PC-9 (cell line): ENCODE measurements at regions of chr13 and their contacts with region 1.

Region 1: DNA sequence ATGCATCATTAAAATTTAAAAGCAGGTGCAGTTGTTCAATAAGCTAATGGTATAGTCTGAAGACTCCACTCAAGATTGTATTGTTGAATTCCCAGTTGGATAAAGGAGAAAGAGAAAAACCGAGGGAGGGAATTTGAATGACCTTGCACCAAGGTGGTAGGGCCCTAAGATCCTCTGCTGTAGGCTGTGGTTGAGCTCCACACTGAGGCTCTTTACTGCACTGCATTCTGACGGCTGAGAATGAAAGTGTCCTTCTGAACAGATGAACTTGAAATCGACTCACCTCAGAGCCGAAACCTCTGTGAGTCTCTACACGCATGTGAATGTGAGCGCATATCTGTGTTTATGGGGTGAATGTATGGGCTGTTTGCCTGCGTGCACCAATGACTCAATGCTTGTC is 388.9 kb upstream of the DACH1 start:
- DNase-seq: peak in 1 of 2 experiments; percentile 3
- H3K4me3 ChIP-seq: no peak overlapping the region
- H3K27ac ChIP-seq: no peak overlapping the region
- H3K4me1 ChIP-seq: no peaks in the 10 kb centered on the region
- H3K27me3 ChIP-seq: no peaks in the 10 kb centered on the region
- CTCF ChIP-seq: peak; percentile 52

Region 2: DNA sequence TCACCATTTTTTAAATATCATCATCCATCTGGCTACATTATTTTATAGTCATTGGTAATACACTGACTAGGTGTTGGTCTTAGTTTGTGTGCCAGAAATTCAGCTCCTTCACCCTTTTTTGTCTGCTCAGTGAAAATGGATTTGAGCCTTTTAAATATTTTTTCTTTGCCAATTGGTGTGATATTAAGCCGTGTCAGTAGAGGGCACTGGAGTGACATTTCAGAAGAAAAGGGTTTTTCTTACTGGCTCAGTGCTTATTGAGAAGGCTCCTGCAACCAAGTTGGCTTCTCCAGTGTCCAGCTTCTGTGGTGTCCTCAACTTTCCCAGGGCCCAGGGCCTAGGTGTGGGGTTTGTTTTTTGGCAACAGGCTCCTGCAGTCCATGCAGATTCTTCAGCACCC is 935.5 kb before region 1 on chr13:
- CTCF ChIA-PET with region 1: no interaction called
- POLR2A ChIA-PET with region 1: no interaction called
- intact Hi-C with region 1: loop called (anchors 10 kb)
- DNase-seq: peak in 1 of 2 experiments; percentile 8
- H3K4me3 ChIP-seq: no peak overlapping the region
- H3K27ac ChIP-seq: no peak overlapping the region
- H3K4me1 ChIP-seq: no peaks in the 10 kb centered on the region
- H3K27me3 ChIP-seq: no peaks in the 10 kb centered on the region
- CTCF ChIP-seq: peak; percentile 68

Region 3: GRCh38 chr13:72403396-72404010 is 147.6 kb after region 1 on chr13:
- CTCF ChIA-PET with region 1: no interaction called
- POLR2A ChIA-PET with region 1: no interaction called
- intact Hi-C with region 1: no loop called
- DNase-seq: no peak
- H3K4me3 ChIP-seq: no peak overlapping the region
- H3K27ac ChIP-seq: no peak overlapping the region
- H3K4me1 ChIP-seq: no peaks in the 10 kb centered on the region
- H3K27me3 ChIP-seq: no peaks in the 10 kb centered on the region
- CTCF ChIP-seq: no peak